Gastrocnemius medialis (tissue), 4 donors: ENCODE measurements at regions of chr14 and their contacts with region 1.

Region 1: DNA sequence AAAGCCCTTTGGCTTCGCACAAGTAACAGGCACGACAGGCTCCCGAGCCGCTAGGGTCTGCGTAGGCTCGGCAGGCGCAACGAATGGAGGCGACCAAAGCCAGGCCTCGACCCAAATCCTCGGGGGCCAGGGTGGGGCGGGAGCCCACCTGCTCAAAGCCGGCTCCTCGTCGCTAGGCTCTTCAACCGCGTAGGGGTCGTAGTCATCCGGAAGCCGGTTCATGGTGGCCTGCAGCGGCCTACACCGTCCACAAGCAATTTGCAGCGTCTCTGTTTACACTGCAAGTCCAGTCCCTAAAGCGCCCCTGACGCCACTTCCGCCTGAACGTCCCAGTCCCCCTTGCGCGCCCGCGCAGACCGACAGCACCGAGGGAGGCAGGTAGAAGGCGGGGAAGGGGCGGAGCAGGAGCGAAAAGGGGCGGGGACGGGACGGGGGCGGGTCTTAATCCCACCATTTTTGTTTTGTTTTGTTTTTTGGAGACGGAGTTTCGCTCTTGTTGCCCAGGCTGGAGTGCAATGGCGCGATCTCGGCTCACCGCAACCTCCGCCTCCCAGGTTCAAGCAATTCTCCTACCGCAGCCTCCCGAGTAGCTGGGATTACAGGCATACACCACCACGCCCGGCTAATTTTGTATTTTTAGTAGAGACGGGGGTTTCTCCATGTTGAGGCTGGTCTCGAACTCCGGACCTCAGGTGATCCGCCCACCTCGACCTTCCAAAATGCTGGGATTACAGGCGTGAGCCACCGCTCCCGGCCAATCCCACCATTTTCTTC is at the start of gene EAPP:
- DNase-seq: peak; percentile 99
- ATAC-seq: peak; percentile 96 to 98
- H3K4me3 ChIP-seq: peak within 1 kb of the TSS; percentile 74 to 98 (median 96)
- H3K27ac ChIP-seq: peak within 1 kb of the TSS; percentile 92 to 98 (median 97)
- H3K4me1 ChIP-seq: peaks cover 18 to 19% of the 10 kb centered on the region in 2 donors
- H3K27me3 ChIP-seq: no peaks in the 10 kb centered on the region
- CTCF ChIP-seq: peak in 2 of 5 experiments; percentile 26 to 28
- POLR2A ChIP-seq: peak; percentile 90 to 96
- total RNA-seq, gene EAPP: 25.6 to 35.7 (median 28.0) TPM

Region 2: DNA sequence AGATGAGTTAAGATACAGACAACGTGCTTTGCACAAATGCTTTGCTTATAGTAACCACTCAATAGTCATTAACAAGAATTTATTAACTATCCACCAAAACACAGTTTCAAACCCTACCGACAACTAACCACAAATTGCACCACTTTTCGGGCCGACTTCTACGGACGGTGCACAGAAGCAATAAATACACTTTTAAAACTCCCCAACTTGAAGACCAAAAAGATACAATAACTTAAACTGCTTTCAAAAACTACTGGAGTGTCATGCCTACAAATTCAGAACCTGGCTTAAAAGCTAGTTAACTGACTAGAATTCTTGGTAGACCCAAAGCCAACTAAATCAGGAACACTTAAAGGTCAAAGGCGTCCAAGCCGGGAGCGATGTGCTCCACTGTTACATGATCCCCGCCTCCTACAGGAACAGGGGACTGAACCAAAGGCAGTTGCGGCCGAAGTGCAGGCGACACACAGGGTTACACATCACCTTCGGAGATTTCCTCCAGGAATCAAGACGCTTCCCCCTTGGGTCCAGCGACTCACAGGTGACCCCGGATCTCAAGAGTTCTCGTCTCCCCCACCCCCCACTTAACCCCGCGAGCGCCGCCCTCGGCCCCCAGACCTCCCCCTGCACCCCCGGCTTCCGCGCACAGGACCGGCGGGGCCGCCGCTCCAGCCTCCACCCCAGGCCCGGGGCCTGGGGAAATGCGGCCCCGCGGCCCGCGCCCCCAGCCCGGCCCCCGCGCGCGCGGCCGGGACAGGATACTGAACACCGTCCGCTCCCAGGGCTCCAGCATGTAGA is 78.1 kb before region 1 on chr14:
- in situ Hi-C with region 1: no loop called
- intact Hi-C with region 1: loop called (anchors 5 kb)
- DNase-seq: peak; percentile 37 to 66
- ATAC-seq: peak; percentile 73 to 78
- H3K4me3 ChIP-seq: peak overlapping the region; percentile 53 to 73 (median 62)
- H3K27ac ChIP-seq: peak overlapping the region; percentile 89 to 91 (median 90)
- H3K4me1 ChIP-seq: peaks cover 12 to 21% of the 10 kb centered on the region in 2 donors
- H3K27me3 ChIP-seq: no peaks in the 10 kb centered on the region
- CTCF ChIP-seq: no peak
- POLR2A ChIP-seq: no peak